ENCODE measurements at regions of chr12 and their contacts with region 1.

Region 1: DNA sequence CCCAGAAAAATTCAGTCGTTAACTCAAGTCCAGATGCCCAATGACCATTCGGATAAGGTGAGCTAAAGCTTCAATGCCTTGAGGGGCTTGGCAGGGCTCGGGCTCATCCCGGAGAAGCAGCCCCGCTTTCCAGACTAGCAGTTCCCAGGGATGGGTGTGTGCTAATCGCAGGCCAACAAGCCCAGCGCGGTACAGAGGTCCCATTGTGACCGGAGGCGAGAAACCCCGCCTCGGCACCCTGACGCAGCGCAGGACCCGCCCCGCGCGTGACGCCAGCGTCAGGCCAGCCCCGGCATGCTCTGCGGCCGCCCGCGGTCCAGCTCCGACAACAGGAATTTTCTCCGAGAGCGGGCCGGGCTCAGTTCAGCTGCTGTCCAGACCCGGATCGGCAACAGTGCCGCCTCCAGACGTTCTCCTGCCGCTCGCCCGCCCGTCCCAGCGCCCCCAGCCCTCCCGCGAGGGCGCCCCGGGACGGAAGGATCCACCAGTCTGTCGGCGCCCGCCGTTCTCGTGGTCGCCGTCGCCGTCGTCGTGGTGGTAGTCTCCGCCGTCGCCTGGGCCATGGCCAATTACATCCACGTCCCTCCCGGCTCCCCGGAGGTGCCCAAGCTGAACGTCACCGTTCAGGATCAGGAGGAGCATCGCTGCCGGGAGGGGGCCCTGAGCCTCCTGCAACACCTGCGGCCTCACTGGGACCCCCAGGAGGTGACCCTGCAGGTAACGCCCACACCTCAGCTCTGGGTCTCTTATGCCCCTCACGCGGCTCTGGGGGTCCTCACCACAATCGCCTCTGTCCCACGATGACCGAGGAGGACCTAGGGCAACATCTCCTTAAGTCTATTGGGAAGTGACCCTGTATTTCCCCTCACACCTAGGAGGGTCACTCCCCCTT is at the start of gene ETNK1:
- DNase-seq: peak; percentile 97
- H3K4me3 ChIP-seq: peak within 1 kb of the TSS; percentile 78 to 94 (median 88)
- H3K27ac ChIP-seq: peak within 1 kb of the TSS; percentile 94 to 99 (median 97)
- H3K4me1 ChIP-seq: peaks cover 0 to 38% (median 25%) of the 10 kb centered on the region in 4 donors
- H3K27me3 ChIP-seq: no peaks in the 10 kb centered on the region
- CTCF ChIP-seq: no peak
- EP300 ChIP-seq: peak in 1 of 4 donors; percentile 86
- POLR2A ChIP-seq: peak; percentile 94
- total RNA-seq, gene ETNK1: 25.7 to 30.0 (median 29.3) TPM

Region 2: DNA sequence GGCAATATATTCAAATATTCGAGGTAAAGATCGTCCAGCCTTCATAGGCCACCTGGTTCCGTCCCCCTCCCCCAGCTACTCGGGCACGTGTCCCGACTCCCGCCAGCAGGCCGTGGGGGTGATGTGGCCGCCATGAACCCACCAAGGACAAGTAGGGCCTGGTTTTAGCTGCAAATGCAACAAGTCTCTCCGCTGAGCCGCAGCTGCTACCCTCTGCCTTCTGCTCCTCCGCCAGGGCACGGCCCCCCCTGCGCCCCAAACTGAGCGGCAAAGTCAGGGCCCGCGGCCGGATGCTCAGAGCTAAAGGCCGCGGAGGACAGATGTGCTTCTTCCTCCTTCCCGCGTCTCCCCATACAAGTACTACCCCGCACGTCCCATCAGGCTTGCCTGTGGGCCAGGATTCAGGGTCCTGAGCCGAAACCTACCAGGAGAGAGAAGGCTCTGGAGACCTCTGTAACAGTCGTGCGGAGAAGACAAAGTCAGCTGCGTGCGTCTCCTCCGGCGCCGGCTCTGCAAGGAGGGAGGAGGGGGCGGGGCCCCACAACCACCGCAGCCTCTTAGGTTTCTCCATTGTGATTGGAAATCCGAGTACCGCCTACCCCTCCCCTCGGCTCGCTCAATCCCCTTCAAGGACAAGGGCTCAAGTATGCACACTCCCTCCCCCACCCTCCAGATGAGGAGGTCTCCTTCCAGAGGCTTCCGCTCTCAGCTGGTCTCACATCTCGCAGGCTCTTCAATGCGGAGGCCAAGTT is 967.6 kb before region 1 on chr12 and contains the start of gene LDHB:
- intact Hi-C with region 1: loop called (anchors 5 kb)
- DNase-seq: peak; percentile 99
- H3K4me3 ChIP-seq: peak within 1 kb of the TSS; percentile 69 to 88 (median 78)
- H3K27ac ChIP-seq: peak within 1 kb of the TSS; percentile 94 to 97 (median 95)
- H3K4me1 ChIP-seq: peaks cover 0 to 36% (median 9%) of the 10 kb centered on the region in 4 donors
- H3K27me3 ChIP-seq: no peaks in the 10 kb centered on the region
- CTCF ChIP-seq: no peak
- EP300 ChIP-seq: no peak
- POLR2A ChIP-seq: peak; percentile 97 to 98
- total RNA-seq, gene LDHB: 355 to 424 (median 379) TPM

Region 3: GRCh38 chr12:22544038-22544979 is 80.8 kb before region 1 on chr12 and contains the start of gene C2CD5:
- intact Hi-C with region 1: loop called (anchors 1 kb)
- DNase-seq: peak; percentile 99
- H3K4me3 ChIP-seq: peak within 1 kb of the TSS; percentile 79 to 85 (median 82)
- H3K27ac ChIP-seq: peak within 1 kb of the TSS; percentile 91 to 94 (median 92)
- H3K4me1 ChIP-seq: peaks cover 0 to 29% (median 27%) of the 10 kb centered on the region in 4 donors
- H3K27me3 ChIP-seq: no peaks in the 10 kb centered on the region
- CTCF ChIP-seq: peak in 3 of 4 experiments; percentile 31 to 38 (median 36)
- EP300 ChIP-seq: peak in 1 of 4 donors; percentile 66
- POLR2A ChIP-seq: peak in 1 of 2 donors; percentile 53
- total RNA-seq, gene C2CD5: 27.2 to 60.1 (median 47.7) TPM

Region 4: GRCh38 chr12:22658214-22658613 is 33.1 kb after region 1 on chr12:
- intact Hi-C with region 1: no loop called
- DNase-seq: no peak
- H3K4me3 ChIP-seq: no peak overlapping the region
- H3K27ac ChIP-seq: no peak overlapping the region
- H3K4me1 ChIP-seq: peaks cover 0 to 9% (median 0%) of the 10 kb centered on the region in 4 donors
- H3K27me3 ChIP-seq: no peaks in the 10 kb centered on the region
- CTCF ChIP-seq: no peak
- EP300 ChIP-seq: no peak
- POLR2A ChIP-seq: no peak

Measured in sigmoid colon (tissue), 7 donors.